ENCODE measurements at regions of chr1 and their contacts with region 1.

Region 1: GRCh38 chr1:102174259-102174863 is 177.6 kb upstream of the OLFM3 start:
- DNase-seq: peak; percentile 37
- H3K4me3 Mint-ChIP-seq: no peak overlapping the region
- H3K27ac Mint-ChIP-seq: no peak overlapping the region
- H3K4me1 Mint-ChIP-seq: no peaks in the 10 kb centered on the region
- H3K27me3 Mint-ChIP-seq: peaks cover 14% of the 10 kb centered on the region
- CTCF ChIP-seq: peak; percentile 33

Region 2: DNA sequence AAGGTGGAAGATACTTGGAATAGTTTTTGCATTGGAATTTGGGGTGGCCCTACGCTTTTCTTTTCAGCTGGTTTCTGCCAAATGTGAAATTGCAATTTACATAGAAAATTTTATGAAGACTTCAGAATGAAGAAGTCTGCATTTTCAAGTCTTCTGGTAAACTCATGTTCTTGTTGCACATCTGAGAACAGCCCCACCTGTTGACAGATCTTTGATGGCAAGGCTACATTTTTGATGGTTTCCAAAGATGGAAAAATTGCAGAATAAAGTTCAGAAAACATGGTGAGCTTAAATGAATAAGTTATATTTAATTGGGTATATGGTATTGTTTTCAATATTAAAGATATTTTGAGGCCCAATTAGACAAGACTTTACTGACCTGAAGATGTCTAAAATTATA is 203.1 kb before region 1 on chr1:
- CTCF ChIA-PET with region 1: no interaction called
- POLR2A ChIA-PET with region 1: no interaction called
- intact Hi-C with region 1: loop called (anchors 10 kb)
- DNase-seq: peak; percentile 16
- H3K4me3 Mint-ChIP-seq: no peak overlapping the region
- H3K27ac Mint-ChIP-seq: no peak overlapping the region
- H3K4me1 Mint-ChIP-seq: no peaks in the 10 kb centered on the region
- H3K27me3 Mint-ChIP-seq: peaks cover 87% of the 10 kb centered on the region
- CTCF ChIP-seq: peak; percentile 20